Activated CD4-positive, alpha-beta T cell treated with anti-CD3 and anti-CD28 coated beads, Interleukin-2, amount 10 ng/mL, durations not matched to agents 24 days and 14 days (primary cell): ENCODE measurements at regions of chr2 and their contacts with region 1.

Region 1: GRCh38 chr2:27628767-27629709 is at the starts of genes CCDC121 and GPN1:
- DNase-seq: peak; percentile 98
- H3K4me3 Mint-ChIP-seq: no peak within 1 kb of the TSS
- H3K27ac Mint-ChIP-seq: no peak within 1 kb of the TSS
- H3K4me1 Mint-ChIP-seq: peaks cover 25% of the 10 kb centered on the region
- H3K27me3 Mint-ChIP-seq: no peaks in the 10 kb centered on the region
- total RNA-seq, gene CCDC121: 0.54 and 0.63 TPM in 2 replicates
- total RNA-seq, gene GPN1: 51.0 and 55.4 TPM in 2 replicates

Region 2: DNA sequence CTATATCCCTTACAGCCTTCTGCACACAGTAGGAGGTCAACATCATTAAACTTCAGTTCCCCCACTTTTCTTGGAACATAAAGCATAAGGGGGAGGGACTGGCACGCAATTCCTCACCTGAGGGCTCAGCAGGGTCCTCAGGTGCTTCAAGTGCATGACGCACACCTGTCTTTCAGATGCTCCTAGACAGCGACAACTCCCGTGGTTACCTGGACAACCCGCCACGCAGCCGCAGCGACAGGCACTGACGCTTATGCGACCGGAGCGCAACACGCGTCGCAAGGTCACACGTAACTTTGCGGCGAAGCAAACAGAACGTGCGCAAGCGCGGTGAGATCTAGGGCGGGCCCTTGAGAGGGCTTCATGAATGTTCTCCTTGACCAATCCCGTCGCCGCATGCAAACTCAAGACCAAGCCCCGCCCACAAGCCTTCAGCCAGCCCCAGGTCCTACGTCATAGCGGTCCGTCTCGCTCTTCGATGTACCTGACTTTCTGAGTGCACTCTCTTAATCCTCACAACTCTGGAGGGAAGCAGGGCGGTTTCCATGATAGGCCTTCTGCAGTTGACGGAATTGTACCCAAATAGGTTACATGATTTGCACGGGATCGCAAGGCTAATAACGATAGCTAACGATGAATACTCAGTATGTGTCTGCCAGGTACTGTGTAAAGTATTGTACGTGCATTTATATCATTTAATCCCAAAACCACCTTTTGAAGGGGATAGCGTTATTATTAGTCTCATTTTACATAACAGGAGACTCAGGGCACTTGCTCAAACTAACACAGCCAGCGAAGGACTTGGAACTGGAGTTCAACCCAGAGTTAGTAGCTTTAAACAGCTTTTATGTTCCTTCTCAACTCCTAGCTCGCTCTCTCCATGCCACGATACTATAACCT is 139.3 kb before region 1 on chr2 and contains the start of gene IFT172:
- intact Hi-C with region 1: loop called (anchors 5 kb)
- DNase-seq: peak; percentile 100
- H3K4me3 Mint-ChIP-seq: peak within 1 kb of the TSS; percentile 84
- H3K27ac Mint-ChIP-seq: peak within 1 kb of the TSS; percentile 87
- H3K4me1 Mint-ChIP-seq: peaks cover 20% of the 10 kb centered on the region
- H3K27me3 Mint-ChIP-seq: peaks cover 18% of the 10 kb centered on the region
- total RNA-seq, gene IFT172: 12.4 and 12.9 TPM in 2 replicates

Region 3: GRCh38 chr2:27582695-27583389 is 46.2 kb before region 1 on chr2 and contains the start of gene ZNF512:
- intact Hi-C with region 1: loop called (anchors 2 kb)
- DNase-seq: peak; percentile 94
- H3K4me3 Mint-ChIP-seq: peak within 1 kb of the TSS; percentile 92
- H3K27ac Mint-ChIP-seq: peak within 1 kb of the TSS; percentile 88
- H3K4me1 Mint-ChIP-seq: peaks cover 43% of the 10 kb centered on the region
- H3K27me3 Mint-ChIP-seq: peaks cover 3% of the 10 kb centered on the region
- total RNA-seq, gene ZNF512: 29.0 and 32.7 TPM in 2 replicates